Activated CD4-positive, alpha-beta T cell treated with anti-CD3 and anti-CD28 coated beads for 36 hours (primary cell): ENCODE measurements at regions of chr12 and their contacts with region 1.

Region 1: DNA sequence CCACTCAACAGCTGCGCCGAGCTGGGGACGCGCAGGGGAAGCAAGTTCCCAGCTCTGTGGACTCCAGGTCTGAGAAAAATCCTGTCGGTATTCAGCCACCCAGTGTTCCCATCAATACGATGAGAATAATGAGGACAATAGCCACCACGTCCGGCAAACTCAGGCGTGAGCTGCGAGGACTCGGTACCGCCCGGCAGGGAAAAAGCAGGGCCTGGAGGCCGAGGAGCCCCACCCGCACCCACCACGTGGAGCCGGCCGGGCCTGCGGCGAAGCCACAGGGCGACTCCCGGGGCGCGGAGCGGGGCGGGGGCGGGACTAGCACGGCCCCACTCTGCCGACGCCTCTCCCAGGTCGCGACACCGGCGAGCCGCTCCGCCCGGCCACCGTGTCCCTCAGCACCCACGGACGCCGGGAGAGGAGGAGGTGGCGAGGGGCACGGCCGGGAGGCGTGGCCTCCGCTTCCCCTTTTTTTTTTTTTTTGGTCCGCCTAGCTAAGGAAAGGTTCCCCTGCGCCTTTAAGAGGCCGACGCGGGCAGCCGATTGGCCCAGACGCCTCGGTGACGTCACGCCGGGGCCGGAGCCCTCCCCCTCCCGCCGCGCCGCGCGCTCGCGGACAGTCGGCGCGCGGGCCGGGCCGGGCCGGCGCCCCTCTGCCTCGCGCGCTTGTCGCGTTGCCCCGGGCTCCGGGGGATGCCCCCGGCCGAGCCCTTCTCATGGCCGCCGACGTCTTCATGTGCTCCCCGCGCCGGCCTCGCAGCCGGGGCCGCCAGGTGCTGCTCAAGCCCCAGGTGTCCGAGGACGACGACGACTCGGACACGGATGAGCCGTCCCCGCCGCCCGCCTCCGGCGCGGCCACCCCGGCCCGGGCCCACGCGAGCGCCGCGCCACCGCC is at the start of gene MLXIP:
- DNase-seq: peak; percentile 94
- ATAC-seq: peak; percentile 68
- H3K4me3 Mint-ChIP-seq: peak within 1 kb of the TSS; percentile 76
- H3K27ac Mint-ChIP-seq: peak within 1 kb of the TSS; percentile 82
- H3K4me1 Mint-ChIP-seq: peaks cover 56% of the 10 kb centered on the region
- H3K27me3 Mint-ChIP-seq: no peaks in the 10 kb centered on the region
- total RNA-seq, gene MLXIP: 17.7 to 26.4 TPM

Region 2: GRCh38 chr12:121296618-121297434 is 781.6 kb before region 1 on chr12 and contains the start of gene CAMKK2:
- CTCF ChIA-PET with region 1: no interaction called
- POLR2A ChIA-PET with region 1: no interaction called
- intact Hi-C with region 1: loop called in 1 of 2 experiments (anchors 1 kb)
- DNase-seq: peak; percentile 92
- ATAC-seq: peak; percentile 86
- H3K4me3 Mint-ChIP-seq: peak within 1 kb of the TSS; percentile 88
- H3K27ac Mint-ChIP-seq: peak within 1 kb of the TSS; percentile 80
- H3K4me1 Mint-ChIP-seq: peaks cover 20% of the 10 kb centered on the region
- H3K27me3 Mint-ChIP-seq: no peaks in the 10 kb centered on the region
- total RNA-seq, gene CAMKK2: 24.2 to 30.3 TPM

Region 3: DNA sequence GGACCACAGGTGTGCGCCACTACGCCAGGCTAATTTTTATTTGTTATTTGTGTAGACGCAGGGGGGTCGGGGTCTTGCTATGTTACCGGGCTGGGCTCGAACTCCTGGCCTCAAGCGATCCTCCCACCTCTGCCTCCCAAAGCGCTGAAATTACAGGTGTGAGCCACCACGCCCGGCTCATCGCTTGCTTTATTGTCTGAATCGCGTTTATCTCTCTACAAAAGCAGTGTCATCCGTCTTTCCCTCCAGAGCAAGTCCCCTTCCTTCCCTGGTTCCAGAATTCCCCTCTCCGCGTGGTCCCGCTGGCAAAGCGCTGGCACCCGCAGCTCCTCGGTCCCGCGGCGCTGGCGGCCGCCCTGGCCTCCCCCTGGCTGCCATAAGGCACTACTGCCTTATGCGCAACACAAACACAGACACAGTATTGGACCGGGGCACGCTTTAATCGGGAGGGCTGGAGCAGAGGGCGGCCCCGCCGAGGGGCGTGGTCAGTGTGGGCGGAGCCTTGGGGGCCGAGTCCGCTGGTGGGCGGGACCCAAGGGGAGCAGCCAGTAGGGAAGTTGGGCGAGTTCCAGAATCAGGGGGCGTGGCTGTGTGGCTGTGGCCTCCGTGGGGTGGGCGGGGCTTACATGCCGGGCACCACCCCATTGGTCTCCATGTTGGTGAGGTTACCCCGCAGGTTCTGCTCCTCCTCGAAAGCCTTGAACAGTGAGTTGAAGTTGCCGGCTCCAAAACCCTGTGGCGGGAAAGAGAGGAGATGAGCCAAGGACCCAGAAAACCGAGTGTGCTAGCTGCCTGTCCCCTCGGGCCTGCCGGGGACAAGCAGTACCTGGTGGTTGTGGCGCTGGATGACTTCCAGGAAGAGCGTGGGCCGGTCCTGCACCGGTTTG is 239.0 kb before region 1 on chr12:
- CTCF ChIA-PET with region 1: no interaction called
- POLR2A ChIA-PET with region 1: no interaction called
- intact Hi-C with region 1: loop called in 1 of 2 experiments (anchors 1 kb)
- DNase-seq: peak; percentile 100
- ATAC-seq: peak; percentile 94
- H3K4me3 Mint-ChIP-seq: peak overlapping the region; percentile 91
- H3K27ac Mint-ChIP-seq: peak overlapping the region; percentile 91
- H3K4me1 Mint-ChIP-seq: peaks cover 14% of the 10 kb centered on the region
- H3K27me3 Mint-ChIP-seq: no peaks in the 10 kb centered on the region

Region 4: GRCh38 chr12:122090759-122091515 is 12.6 kb after region 1 on chr12:
- CTCF ChIA-PET with region 1: interaction called, 13 read pairs
- POLR2A ChIA-PET with region 1: interaction called, 5 read pairs
- intact Hi-C with region 1: loop called in 1 of 2 experiments (anchors 2 kb)
- DNase-seq: no peak
- ATAC-seq: no peak
- H3K4me3 Mint-ChIP-seq: no peak overlapping the region
- H3K27ac Mint-ChIP-seq: no peak overlapping the region
- H3K4me1 Mint-ChIP-seq: peaks cover 56% of the 10 kb centered on the region
- H3K27me3 Mint-ChIP-seq: no peaks in the 10 kb centered on the region

Region 5: GRCh38 chr12:122123051-122123760 is 44.8 kb after region 1 on chr12:
- CTCF ChIA-PET with region 1: interaction called, 11 read pairs
- POLR2A ChIA-PET with region 1: no interaction called
- intact Hi-C with region 1: loop called in 1 of 2 experiments (anchors 2 kb)
- DNase-seq: peak; percentile 84
- ATAC-seq: peak; percentile 81
- H3K4me3 Mint-ChIP-seq: no peak overlapping the region
- H3K27ac Mint-ChIP-seq: peak overlapping the region; percentile 85
- H3K4me1 Mint-ChIP-seq: peaks cover 34% of the 10 kb centered on the region
- H3K27me3 Mint-ChIP-seq: no peaks in the 10 kb centered on the region

Region 6: DNA sequence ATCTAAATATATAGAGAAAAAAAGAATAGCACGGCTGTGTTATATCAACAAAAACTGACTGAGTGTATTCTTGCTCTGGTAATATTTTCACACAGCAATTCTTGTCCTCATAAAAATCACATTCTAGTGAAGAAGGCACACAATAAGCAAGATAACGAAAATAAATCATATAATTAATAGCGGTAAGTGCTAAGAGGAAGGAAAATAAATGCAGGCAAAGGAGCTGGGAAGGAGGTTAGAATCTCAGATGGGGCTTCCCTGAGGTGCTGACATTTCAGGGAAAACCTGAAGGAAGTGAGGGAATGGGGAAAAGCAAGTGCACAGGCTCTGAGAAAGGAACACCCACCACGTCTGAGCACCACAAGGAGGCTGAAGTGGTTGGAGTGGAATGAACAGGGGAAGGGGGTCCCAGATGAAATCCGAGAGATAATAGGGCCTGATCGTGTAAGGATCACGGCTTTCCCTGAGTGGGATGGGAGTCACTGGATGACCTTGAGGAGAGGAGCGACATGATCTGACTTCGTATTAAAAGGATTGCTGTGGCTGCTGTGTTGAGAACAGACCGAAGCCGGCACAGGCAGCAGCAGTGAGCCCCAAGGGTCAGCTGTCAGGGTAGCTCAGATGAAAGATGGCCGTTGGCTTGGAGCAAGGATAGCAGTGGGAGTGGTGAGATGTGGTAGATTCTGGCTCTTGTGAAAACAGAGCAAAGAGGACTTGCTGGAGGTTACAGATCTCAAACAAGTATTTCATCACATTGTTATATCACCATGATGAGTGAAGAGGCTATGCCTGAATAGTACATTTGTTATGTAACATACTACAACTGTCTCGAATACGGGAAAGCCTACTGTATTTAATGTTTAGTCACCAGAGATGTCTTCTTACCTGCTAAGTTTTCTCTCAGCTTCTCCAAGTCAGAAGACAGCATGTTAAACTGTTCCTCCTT is 255.0 kb after region 1 on chr12:
- CTCF ChIA-PET with region 1: no interaction called
- POLR2A ChIA-PET with region 1: no interaction called
- intact Hi-C with region 1: no loop called
- DNase-seq: no peak
- ATAC-seq: no peak
- H3K4me3 Mint-ChIP-seq: no peak overlapping the region
- H3K27ac Mint-ChIP-seq: peak overlapping the region; percentile 14
- H3K4me1 Mint-ChIP-seq: peaks cover 12% of the 10 kb centered on the region
- H3K27me3 Mint-ChIP-seq: no peaks in the 10 kb centered on the region

Region 7: GRCh38 chr12:122500685-122501488 is 422.5 kb after region 1 on chr12 and contains the start of gene ZCCHC8:
- CTCF ChIA-PET with region 1: no interaction called
- POLR2A ChIA-PET with region 1: interaction called, 8 read pairs
- intact Hi-C with region 1: loop called in 1 of 2 experiments (anchors 5 kb)
- DNase-seq: peak; percentile 99
- ATAC-seq: peak; percentile 95
- H3K4me3 Mint-ChIP-seq: peak within 1 kb of the TSS; percentile 97
- H3K27ac Mint-ChIP-seq: peak within 1 kb of the TSS; percentile 98
- H3K4me1 Mint-ChIP-seq: peaks cover 32% of the 10 kb centered on the region
- H3K27me3 Mint-ChIP-seq: no peaks in the 10 kb centered on the region
- total RNA-seq, gene ZCCHC8: 34.7 to 39.1 TPM